ENCODE measurements at regions of chr19 and their contacts with region 1.

Region 1: GRCh38 chr19:19776041-19777008 is 43.4 kb upstream of the ZNF14 start:
- DNase-seq: peak; percentile 96
- H3K4me3 ChIP-seq: peak overlapping the region; percentile 78
- H3K27ac ChIP-seq: peak overlapping the region; percentile 6
- H3K4me1 ChIP-seq: peaks cover 23% of the 10 kb centered on the region
- CTCF ChIP-seq: no peak

Region 2: DNA sequence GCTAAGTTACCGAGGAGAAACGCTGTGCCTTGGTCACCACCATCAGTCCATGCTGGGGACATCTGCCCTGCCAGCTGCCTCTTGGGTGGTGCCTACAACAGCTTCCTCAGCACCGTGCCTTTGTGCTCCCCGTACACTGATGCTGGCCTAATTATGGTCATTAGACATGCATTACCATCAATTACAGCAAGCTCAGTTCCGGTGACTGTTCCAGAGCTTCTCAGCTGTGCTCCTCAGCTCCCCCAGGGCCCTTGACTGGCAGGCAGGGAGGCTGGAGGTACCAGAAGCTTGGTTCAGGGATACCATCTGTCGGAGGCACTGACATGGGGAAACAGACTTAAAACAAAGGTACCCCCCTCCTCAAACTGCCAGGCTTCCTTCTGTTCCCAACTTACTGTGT is 198.1 kb before region 1 on chr19:
- CTCF ChIA-PET with region 1: no interaction called
- POLR2A ChIA-PET with region 1: no interaction called
- intact Hi-C with region 1: no loop called
- DNase-seq: no peak
- H3K4me3 ChIP-seq: no peak overlapping the region
- H3K27ac ChIP-seq: no peak overlapping the region
- H3K4me1 ChIP-seq: no peaks in the 10 kb centered on the region
- CTCF ChIP-seq: no peak

Region 3: GRCh38 chr19:19821366-19821951 is 45.1 kb after region 1 on chr19 and contains the start of gene ZNF506:
- CTCF ChIA-PET with region 1: no interaction called
- POLR2A ChIA-PET with region 1: interaction called, 10 read pairs
- intact Hi-C with region 1: no loop called
- DNase-seq: peak; percentile 99
- H3K4me3 ChIP-seq: peak within 1 kb of the TSS; percentile 87
- H3K27ac ChIP-seq: peak within 1 kb of the TSS; percentile 76
- H3K4me1 ChIP-seq: peaks cover 4% of the 10 kb centered on the region
- CTCF ChIP-seq: no peak
- total RNA-seq, gene ZNF506: 22.1 and 36.4 TPM in 2 replicates

Region 4: DNA sequence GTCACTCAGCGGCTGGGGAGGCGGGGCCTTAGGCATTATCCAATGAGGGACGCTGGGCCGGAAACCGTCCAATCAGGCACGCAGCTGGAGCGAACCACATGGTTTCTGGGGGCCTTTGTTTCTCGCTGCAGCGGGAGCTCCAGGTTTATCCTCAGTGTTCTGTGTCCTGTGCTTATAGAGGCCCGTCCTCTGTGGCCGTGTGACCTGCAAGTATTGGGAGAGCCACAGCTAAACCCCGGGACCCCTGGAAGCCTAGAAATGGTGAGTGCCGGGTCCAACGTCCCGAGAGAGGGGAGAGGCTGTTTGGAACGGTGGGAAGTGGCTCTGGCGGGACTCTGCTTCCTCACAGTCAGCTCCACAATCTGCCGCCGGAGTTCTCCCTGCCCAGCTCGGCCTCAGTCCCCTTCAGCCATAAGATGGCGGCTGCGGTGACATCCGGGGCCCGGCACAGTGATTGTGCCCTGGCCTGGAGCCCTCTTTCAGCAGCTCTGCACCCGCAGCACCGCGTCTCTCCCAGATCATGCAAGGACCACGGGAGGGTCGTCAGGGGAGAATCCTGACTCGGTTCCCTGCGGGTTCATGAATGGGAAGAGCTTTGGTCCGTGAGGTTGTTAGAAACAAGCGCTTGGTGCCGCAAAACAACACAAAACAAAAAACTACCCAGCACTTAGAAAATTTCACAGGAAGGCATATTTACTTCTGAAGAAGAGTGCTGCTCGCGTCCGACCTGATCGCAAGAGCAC is 89.6 kb after region 1 on chr19 and contains the start of gene ZNF253:
- CTCF ChIA-PET with region 1: no interaction called
- POLR2A ChIA-PET with region 1: interaction called, 10 read pairs
- intact Hi-C with region 1: no loop called
- DNase-seq: peak; percentile 98
- H3K4me3 ChIP-seq: peak within 1 kb of the TSS; percentile 93
- H3K27ac ChIP-seq: peak within 1 kb of the TSS; percentile 89
- H3K4me1 ChIP-seq: peaks cover 20% of the 10 kb centered on the region
- CTCF ChIP-seq: no peak
- total RNA-seq, gene ZNF253: 20.5 and 29.9 TPM in 2 replicates

Region 5: DNA sequence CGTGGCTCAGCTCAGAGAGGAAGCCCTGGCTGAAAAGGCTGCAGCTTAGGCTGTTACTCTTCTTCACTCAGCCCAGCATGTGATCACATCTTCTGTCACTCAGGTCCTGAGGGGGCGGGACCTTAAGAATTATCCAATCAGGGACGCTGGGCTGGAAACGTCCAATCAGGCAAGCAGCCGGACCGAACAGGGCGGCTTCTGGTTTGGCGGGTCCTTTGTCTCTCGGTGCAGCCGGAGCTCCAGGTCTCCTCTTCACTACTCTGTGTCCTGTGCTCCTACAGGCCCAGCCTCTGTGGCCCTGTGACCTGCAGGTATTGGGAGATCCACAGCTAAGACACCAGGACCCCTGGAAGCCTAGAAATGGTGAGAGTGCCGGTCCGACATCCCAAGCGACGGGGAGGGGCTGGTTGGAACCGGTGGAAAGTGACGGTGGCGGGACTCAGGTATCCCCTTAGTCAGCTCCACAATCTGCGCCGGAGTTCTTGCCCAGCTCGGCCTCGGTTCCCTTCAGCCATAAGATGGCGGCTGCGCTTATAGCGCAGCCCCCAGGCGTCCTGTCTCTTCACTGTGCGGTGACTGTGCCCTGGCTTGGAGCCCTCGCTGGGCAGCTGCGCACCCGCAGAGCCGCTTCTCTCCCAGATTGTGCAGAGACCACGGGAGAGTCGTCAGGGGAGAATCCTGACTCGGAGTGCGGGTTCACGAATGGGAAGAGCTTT is 124.6 kb after region 1 on chr19 and contains the start of gene ZNF93:
- CTCF ChIA-PET with region 1: no interaction called
- POLR2A ChIA-PET with region 1: interaction called, 10 read pairs
- intact Hi-C with region 1: no loop called
- DNase-seq: peak; percentile 98
- H3K4me3 ChIP-seq: peak within 1 kb of the TSS; percentile 98
- H3K27ac ChIP-seq: peak within 1 kb of the TSS; percentile 53
- H3K4me1 ChIP-seq: peaks cover 12% of the 10 kb centered on the region
- CTCF ChIP-seq: no peak
- total RNA-seq, gene ZNF93: 17.5 and 18.5 TPM in 2 replicates

Region 6: DNA sequence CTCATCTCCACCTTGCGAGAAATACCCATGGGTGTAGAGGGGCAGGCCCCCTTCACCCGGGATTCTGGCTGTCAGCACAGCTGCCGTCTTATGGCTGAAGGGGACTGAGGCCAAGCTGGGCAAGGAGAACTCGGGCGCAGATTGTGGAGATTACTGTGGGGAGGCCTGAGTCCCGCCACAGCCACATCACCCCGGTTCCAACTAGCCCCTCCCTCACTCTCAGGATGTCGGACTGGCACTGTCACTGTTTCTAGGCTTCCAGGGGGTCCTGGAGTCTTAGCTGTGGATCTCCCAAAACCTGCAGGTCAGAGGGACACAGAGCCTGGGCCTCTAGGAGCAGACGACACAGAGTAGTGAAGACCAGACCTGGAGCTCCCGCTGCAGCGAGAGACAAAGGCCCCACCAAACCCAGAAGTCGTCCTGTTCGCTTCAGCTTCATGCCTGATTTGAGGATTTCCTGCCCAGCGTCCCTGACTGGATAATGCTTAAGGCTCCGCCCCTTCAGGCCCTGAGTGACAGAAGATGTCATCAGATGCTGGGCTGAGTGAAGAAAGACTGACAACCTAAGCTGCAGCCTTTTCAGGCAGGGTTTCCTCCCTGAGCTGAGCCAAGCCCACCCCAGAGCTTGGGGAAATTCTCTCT is 180.2 kb after region 1 on chr19:
- CTCF ChIA-PET with region 1: no interaction called
- POLR2A ChIA-PET with region 1: no interaction called
- intact Hi-C with region 1: loop called (anchors 10 kb)
- DNase-seq: no peak
- H3K4me3 ChIP-seq: no peak overlapping the region
- H3K27ac ChIP-seq: no peak overlapping the region
- H3K4me1 ChIP-seq: no peaks in the 10 kb centered on the region
- CTCF ChIP-seq: no peak

Region 7: DNA sequence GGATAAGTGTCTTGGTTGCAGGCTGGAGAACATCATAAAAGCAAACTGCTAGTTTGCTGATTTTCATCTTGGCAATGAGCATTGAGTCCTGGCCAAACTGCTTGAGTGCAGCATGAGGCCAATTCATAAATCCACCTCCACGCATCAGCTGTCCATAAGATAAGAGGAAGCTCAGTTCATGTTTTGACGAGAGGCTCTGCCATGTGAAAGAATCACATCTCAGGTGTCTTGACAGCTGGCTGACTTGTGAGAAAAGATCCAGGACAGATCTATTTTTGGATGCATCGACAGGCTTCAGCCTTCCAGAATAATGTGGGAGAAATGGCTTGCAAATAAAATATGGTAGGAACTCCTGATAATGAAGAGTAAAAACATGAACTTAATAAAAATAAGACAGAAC is 268.3 kb after region 1 on chr19:
- CTCF ChIA-PET with region 1: no interaction called
- POLR2A ChIA-PET with region 1: no interaction called
- intact Hi-C with region 1: no loop called
- DNase-seq: no peak
- H3K4me3 ChIP-seq: no peak overlapping the region
- H3K27ac ChIP-seq: no peak overlapping the region
- H3K4me1 ChIP-seq: no peaks in the 10 kb centered on the region
- CTCF ChIP-seq: no peak